Dendritic cell treated with granulocyte-macrophage colony-stimulating factor and Interleukin-4, amounts not matched to agents 40 ng/mL and 50 ng/mL, for 4 days (primary cell): ENCODE measurements at regions of chr2 and their contacts with region 1.

Region 1: GRCh38 chr2:152189622-152190495 is 14.3 kb upstream of the STAM2 start:
- H3K4me3 Mint-ChIP-seq: no peak overlapping the region
- H3K27ac Mint-ChIP-seq: no peak overlapping the region
- H3K4me1 Mint-ChIP-seq: no peaks in the 10 kb centered on the region
- H3K27me3 Mint-ChIP-seq: peaks cover 8% of the 10 kb centered on the region

Region 2: DNA sequence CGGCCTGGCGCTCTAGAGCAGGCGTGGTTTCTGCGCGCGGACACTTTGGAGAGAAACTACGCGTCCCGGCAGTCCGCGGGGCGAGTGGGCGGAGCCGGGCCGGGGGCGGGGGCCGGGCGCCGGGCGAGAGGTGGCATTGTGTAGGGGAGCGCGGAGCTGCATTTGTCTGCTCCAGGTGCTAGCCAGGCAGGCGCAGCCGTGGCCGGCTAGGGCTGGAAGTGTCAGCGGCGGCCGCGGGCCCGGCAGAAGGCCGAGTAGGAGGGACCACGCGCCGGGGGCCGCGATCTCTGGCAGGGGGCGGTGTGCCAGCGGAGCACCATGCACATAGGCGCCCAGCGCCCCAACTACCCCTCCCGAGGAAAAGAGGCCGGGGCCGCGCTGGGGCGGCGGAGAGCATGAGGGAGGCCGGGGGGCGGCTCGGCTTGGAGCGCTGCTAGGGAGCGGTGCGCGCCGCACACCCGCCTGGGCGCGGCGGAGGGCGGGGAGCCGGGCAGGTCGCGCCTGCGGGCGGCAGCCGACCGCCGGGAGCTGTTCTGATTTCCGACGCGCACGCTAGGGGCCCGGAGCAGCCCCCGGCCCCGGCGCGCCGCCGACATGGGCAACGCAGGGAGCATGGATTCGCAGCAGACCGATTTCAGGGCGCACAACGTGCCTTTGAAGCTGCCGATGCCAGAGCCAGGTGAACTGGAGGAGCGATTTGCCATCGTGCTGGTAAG is 145.3 kb after region 1 on chr2 and contains the start of gene FMNL2:
- intact Hi-C with region 1: loop called (anchors 10 kb)
- H3K4me3 Mint-ChIP-seq: peak within 1 kb of the TSS; percentile 86
- H3K27ac Mint-ChIP-seq: peak within 1 kb of the TSS; percentile 82
- H3K4me1 Mint-ChIP-seq: peaks cover 29% of the 10 kb centered on the region
- H3K27me3 Mint-ChIP-seq: peaks cover 43% of the 10 kb centered on the region

Region 3: GRCh38 chr2:152558158-152558984 is 368.5 kb after region 1 on chr2:
- intact Hi-C with region 1: loop called (anchors 10 kb)
- H3K4me3 Mint-ChIP-seq: no peak overlapping the region
- H3K27ac Mint-ChIP-seq: no peak overlapping the region
- H3K4me1 Mint-ChIP-seq: no peaks in the 10 kb centered on the region
- H3K27me3 Mint-ChIP-seq: no peaks in the 10 kb centered on the region

Region 4: DNA sequence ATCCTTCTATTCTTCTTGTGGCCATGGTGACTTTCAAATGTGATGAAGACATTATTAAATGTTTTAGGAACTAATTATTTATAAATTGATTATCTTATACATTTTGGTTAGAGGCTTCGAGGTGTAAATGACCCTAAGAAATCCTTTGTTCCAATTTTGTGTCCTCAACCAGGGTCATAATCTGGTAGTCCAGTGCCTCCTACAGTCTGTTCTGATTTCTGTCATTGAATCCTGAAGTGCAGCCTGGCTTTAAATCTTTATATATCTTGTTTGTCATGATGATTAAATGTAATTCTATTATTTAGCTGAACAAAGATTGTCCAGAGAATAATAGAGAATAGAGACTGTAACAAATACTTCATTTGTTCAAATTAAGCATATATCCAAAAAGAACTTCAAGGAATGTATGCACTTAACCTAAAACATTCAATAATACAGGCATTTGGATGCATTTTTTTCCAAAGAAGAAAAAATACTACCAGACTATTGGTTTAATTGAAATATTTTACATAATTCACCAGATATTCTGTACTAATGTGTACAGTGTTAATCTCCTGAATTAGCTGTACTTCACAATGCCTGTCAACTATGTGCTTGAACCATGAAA is 437.6 kb after region 1 on chr2:
- intact Hi-C with region 1: loop called (anchors 1 kb)
- H3K4me3 Mint-ChIP-seq: no peak overlapping the region
- H3K27ac Mint-ChIP-seq: no peak overlapping the region
- H3K4me1 Mint-ChIP-seq: peaks cover 8% of the 10 kb centered on the region
- H3K27me3 Mint-ChIP-seq: no peaks in the 10 kb centered on the region

Region 5: GRCh38 chr2:152635635-152636298 is 445.9 kb after region 1 on chr2:
- intact Hi-C with region 1: loop called (anchors 1 kb)
- H3K4me3 Mint-ChIP-seq: no peak overlapping the region
- H3K27ac Mint-ChIP-seq: no peak overlapping the region
- H3K4me1 Mint-ChIP-seq: peaks cover 5% of the 10 kb centered on the region
- H3K27me3 Mint-ChIP-seq: peaks cover 2% of the 10 kb centered on the region